Right cardiac atrium (tissue), 5 donors: ENCODE measurements at regions of chrX and their contacts with region 1.

Region 1: GRCh38 chrX:129905787-129906580 is at the start of gene UTP14A:
- DNase-seq: peak; percentile 90 to 95 (median 92)
- ATAC-seq: peak; percentile 98 to 100
- H3K4me3 ChIP-seq: peak within 1 kb of the TSS; percentile 84
- H3K27ac ChIP-seq: peak within 1 kb of the TSS; percentile 65
- H3K4me1 ChIP-seq: no peaks in the 10 kb centered on the region
- H3K27me3 ChIP-seq: no peaks in the 10 kb centered on the region
- total RNA-seq, gene UTP14A: 8.1 to 11.2 (median 8.5) TPM

Region 2: DNA sequence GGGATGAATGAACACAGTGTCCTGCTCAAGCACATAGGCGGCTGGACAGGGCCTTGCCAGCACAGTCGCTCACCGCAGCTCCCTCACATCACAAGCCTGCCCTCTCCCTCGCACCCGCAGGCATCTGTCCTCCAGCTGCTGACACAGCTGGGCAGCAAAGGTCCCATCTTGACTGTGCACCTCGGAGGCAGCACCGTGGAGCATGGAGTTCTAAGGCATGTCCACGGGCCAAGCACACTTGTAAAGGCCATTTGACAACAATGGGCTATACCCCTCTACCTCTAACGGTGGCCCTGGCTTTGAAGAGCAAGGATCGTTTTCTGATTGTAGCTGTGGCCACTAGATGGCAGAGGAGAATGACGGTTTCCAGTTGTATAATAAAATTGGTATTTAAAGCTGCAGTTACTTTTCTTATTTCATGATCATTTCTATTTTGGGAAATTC is 305.0 kb before region 1 on chrX:
- intact Hi-C with region 1: loop called in 1 of 4 experiments (anchors 5 kb)
- DNase-seq: no peak
- ATAC-seq: peak in 1 of 2 donors; percentile 10
- H3K4me3 ChIP-seq: no peak overlapping the region
- H3K27ac ChIP-seq: peak overlapping the region; percentile 23
- H3K4me1 ChIP-seq: peaks cover 3% of the 10 kb centered on the region
- H3K27me3 ChIP-seq: no peaks in the 10 kb centered on the region